Activated CD8-positive, alpha-beta T cell treated with anti-CD3 and anti-CD28 coated beads, Interleukin-2, amount 10 ng/mL, durations not matched to agents 7 days and 5 days (primary cell): ENCODE measurements at regions of chr18 and their contacts with region 1.

Region 1: GRCh38 chr18:21808185-21808584 is 67.6 kb downstream of the MIB1 start:
- DNase-seq: no peak
- ATAC-seq: no peak
- H3K4me3 Mint-ChIP-seq: no peak overlapping the region
- H3K27ac Mint-ChIP-seq: no peak overlapping the region
- H3K4me1 Mint-ChIP-seq: no peaks in the 10 kb centered on the region
- H3K27me3 Mint-ChIP-seq: no peaks in the 10 kb centered on the region

Region 2: GRCh38 chr18:21820035-21820810 is 12.0 kb after region 1 on chr18:
- CTCF ChIA-PET with region 1: interaction called, 10 read pairs
- POLR2A ChIA-PET with region 1: no interaction called
- DNase-seq: no peak
- ATAC-seq: no peak
- H3K4me3 Mint-ChIP-seq: no peak overlapping the region
- H3K27ac Mint-ChIP-seq: no peak overlapping the region
- H3K4me1 Mint-ChIP-seq: no peaks in the 10 kb centered on the region
- H3K27me3 Mint-ChIP-seq: no peaks in the 10 kb centered on the region